CD4-positive, alpha-beta memory T cell (primary cell): ENCODE measurements at regions of chr4 and their contacts with region 1.

Region 1: DNA sequence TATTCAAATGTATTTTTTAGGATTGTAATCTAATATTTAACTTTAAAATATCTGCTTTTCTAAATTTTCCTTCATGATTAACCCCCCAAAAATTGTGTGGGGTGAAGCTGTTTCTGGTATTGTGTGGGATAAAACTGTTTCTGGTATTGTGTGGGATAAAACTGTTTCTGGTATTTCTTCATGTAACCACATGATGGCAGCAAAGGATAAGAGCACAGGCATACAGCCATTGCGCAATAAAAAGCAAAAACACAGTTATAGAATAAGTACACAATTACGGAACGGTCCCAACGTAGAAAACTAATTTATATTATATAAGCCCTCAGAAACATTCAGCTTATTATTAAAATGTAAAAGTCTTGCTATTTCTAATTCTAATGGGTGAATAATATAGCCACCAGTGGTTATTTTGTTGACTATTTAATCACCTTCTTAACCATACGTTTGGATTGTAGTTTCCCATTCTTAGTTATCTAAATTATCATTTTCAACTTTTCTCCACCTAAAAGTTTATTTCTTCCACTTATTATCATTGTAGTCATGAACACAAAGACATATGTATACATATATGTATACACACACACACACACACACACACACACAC is 333.9 kb upstream of the FSTL5 start:
- DNase-seq: peak in 4 of 5 donors; percentile 28 to 40 (median 31)
- H3K4me3 ChIP-seq: no peak overlapping the region
- H3K4me3 Mint-ChIP-seq: no peak overlapping the region
- H3K27ac ChIP-seq: no peak overlapping the region
- H3K27ac Mint-ChIP-seq: no peak overlapping the region
- H3K4me1 ChIP-seq: no peaks in the 10 kb centered on the region
- H3K4me1 Mint-ChIP-seq: no peaks in the 10 kb centered on the region
- H3K27me3 ChIP-seq: no peaks in the 10 kb centered on the region
- H3K27me3 Mint-ChIP-seq: peaks cover 0 to 1% of the 10 kb centered on the region in 2 donors

Region 2: DNA sequence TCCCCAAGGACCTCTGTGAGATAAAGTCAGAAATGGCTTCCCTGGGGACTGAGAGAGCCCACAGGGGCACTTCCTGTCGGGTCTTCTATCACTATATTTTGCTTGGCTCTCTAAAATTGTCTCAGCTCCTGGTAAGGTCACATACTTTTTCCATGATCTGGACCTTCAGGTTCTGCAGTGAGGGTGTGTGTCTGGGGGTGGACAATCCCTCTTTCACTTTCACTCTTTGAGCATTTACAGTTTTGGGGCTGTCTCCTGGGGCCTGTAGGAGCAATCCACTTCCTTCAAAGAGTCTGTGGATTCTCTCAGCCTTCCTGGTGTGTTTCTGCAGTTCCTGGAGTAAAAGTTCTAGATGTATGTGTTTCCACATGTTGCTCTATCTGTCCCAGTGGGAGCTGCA is 669.6 kb before region 1 on chr4:
- CTCF ChIA-PET with region 1: no interaction called
- POLR2A ChIA-PET with region 1: no interaction called
- intact Hi-C with region 1: no loop called
- DNase-seq: no peak
- H3K4me3 ChIP-seq: no peak overlapping the region
- H3K4me3 Mint-ChIP-seq: no peak overlapping the region
- H3K27ac ChIP-seq: no peak overlapping the region
- H3K27ac Mint-ChIP-seq: no peak overlapping the region
- H3K4me1 ChIP-seq: no peaks in the 10 kb centered on the region
- H3K4me1 Mint-ChIP-seq: no peaks in the 10 kb centered on the region
- H3K27me3 ChIP-seq: no peaks in the 10 kb centered on the region
- H3K27me3 Mint-ChIP-seq: no peaks in the 10 kb centered on the region

Region 3: GRCh38 chr4:163332500-163333406 is 835.1 kb after region 1 on chr4 and contains the start of gene NPY1R:
- CTCF ChIA-PET with region 1: no interaction called
- POLR2A ChIA-PET with region 1: no interaction called
- intact Hi-C with region 1: loop called (anchors 2 kb)
- DNase-seq: peak in 1 of 5 donors; percentile 6
- H3K4me3 ChIP-seq: no peak within 1 kb of the TSS
- H3K4me3 Mint-ChIP-seq: peak within 1 kb of the TSS; percentile 23 to 76 (median 62)
- H3K27ac ChIP-seq: no peak within 1 kb of the TSS
- H3K27ac Mint-ChIP-seq: no peak within 1 kb of the TSS
- H3K4me1 ChIP-seq: peaks cover 7% of the 10 kb centered on the region
- H3K4me1 Mint-ChIP-seq: peaks cover 5 to 19% (median 15%) of the 10 kb centered on the region in 4 donors
- H3K27me3 ChIP-seq: peaks cover 4% of the 10 kb centered on the region
- H3K27me3 Mint-ChIP-seq: peaks cover 31% of the 10 kb centered on the region in 2 donors
- total RNA-seq, gene NPY1R: not detected